Activated naive CD4-positive, alpha-beta T cell treated with anti-CD3 and anti-CD28 coated beads for 36 hours (primary cell): ENCODE measurements at regions of chr22 and their contacts with region 1.

Region 1: DNA sequence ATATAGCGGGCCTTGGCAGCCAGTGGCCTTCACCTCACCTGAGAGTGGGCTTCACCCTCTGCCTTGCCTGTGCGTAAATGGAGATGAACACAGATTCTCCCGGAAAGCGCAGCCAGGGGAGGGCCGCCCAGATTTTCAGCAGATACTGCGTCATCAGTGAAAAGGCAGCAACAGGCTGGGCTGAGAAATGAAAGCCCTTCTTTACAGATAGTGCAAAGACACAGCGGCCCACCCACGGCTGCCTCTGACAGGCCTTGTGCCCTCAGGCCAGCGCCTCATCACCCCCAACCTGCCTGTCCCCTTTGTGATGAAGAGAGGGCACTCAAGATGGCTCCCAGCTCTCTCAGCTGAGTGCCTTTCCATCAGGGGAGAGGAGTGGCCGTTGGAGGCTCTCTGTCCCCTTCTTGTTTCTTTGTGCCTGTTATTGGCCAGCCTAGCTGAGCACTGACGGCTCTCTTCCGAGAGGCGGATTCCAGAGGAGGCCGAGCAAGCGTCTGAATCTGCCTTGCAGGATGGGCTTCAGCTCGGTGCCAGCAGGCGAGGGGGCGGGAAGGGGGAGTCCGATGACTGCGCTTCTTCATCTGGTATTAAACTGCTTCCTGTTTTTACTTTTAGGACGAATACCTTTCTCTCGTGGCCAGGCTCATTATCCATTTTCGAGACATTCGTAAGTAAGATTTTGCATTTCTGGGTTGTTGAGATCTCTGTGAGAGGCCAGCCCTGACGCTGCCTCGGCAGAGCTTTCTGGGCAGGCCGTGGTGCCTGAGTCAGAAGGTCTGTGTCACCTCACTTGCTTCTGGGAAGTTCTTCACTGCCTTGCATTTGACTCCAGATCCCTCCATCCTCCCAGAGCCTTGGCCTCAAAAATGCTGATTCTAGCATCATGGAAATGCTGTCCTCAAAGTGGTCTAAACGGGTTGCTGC is 43.7 kb downstream of the MED15 start:
- DNase-seq: peak; percentile 87
- H3K4me3 Mint-ChIP-seq: peak overlapping the region; percentile 70
- H3K27ac Mint-ChIP-seq: peak overlapping the region; percentile 100
- H3K4me1 Mint-ChIP-seq: peaks cover 93% of the 10 kb centered on the region
- H3K27me3 Mint-ChIP-seq: no peaks in the 10 kb centered on the region

Region 2: DNA sequence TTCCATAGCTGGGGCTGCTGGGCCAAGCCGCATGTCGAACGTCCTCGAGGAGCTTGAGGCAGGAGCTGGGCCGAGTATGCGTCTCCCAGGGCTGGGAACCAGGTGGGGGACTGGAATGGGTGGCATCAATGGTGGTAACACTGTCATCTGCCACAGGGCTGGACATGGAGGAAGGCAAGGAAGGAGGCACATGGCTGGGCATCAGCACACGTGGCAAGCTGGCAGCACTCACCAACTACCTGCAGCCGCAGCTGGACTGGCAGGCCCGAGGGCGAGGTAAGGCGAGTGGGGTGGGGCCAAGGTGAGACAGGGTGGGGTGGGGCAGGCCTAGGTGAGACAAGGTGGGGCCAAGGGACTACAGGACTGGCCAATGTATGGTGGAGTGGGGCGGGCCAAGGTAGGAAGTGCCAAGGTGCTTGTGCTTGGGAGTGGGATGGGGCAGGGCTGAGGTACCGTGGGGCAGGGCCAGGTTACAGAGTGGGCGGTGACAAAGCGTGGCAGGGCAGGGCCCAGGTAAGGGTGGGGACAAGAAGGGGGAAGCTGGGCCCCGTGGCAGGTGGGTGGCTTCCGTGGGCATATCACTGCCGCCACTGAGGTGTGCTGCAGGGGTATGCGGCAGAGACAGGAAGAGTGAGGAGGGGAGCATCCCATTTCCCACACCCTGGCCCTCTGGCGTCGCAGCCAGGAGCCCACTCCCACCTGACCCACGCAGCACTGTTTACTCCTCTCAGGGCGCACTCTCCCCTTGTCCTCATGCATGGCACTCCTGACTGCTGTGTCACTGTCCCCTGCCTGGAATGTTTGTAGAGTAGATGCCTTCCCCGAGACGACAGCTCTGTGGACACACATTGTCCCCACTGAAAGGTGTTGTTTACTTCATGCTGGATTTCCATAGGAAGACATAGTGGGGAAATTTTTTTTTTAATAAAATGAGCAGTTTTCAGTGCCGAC is 498.5 kb before region 1 on chr22:
- CTCF ChIA-PET with region 1: no interaction called
- intact Hi-C with region 1: no loop called
- DNase-seq: no peak
- H3K4me3 Mint-ChIP-seq: no peak overlapping the region
- H3K27ac Mint-ChIP-seq: no peak overlapping the region
- H3K4me1 Mint-ChIP-seq: peaks cover 9% of the 10 kb centered on the region
- H3K27me3 Mint-ChIP-seq: no peaks in the 10 kb centered on the region

Region 3: GRCh38 chr22:20469110-20469868 is 81.8 kb before region 1 on chr22:
- CTCF ChIA-PET with region 1: no interaction called
- intact Hi-C with region 1: no loop called
- DNase-seq: no peak
- H3K4me3 Mint-ChIP-seq: no peak overlapping the region
- H3K27ac Mint-ChIP-seq: peak overlapping the region; percentile 31
- H3K4me1 Mint-ChIP-seq: peaks cover 49% of the 10 kb centered on the region
- H3K27me3 Mint-ChIP-seq: no peaks in the 10 kb centered on the region

Region 4: GRCh38 chr22:20523086-20523983 is 27.7 kb before region 1 on chr22:
- CTCF ChIA-PET with region 1: interaction called, 4 read pairs
- intact Hi-C with region 1: loop called (anchors 1 kb)
- DNase-seq: peak; percentile 38
- H3K4me3 Mint-ChIP-seq: no peak overlapping the region
- H3K27ac Mint-ChIP-seq: peak overlapping the region; percentile 20
- H3K4me1 Mint-ChIP-seq: peaks cover 78% of the 10 kb centered on the region
- H3K27me3 Mint-ChIP-seq: no peaks in the 10 kb centered on the region